CD14-positive monocyte (primary cell): ENCODE measurements at regions of chr2 and their contacts with region 1.

Region 1: GRCh38 chr2:44981136-44982108 is 27.8 kb downstream of the SIX2 start:
- DNase-seq: peak; percentile 42 to 62 (median 49)
- H3K4me3 ChIP-seq: no peak overlapping the region
- H3K4me3 Mint-ChIP-seq: no peak overlapping the region
- H3K27ac ChIP-seq: no peak overlapping the region
- H3K27ac Mint-ChIP-seq: no peak overlapping the region
- H3K4me1 ChIP-seq: no peaks in the 10 kb centered on the region
- H3K4me1 Mint-ChIP-seq: peaks cover 3% of the 10 kb centered on the region
- H3K27me3 ChIP-seq: peaks cover 3 to 10% of the 10 kb centered on the region in 2 donors
- H3K27me3 Mint-ChIP-seq: peaks cover 13 to 23% (median 13%) of the 10 kb centered on the region in 3 donors
- CTCF ChIP-seq: peak; percentile 87

Region 2: GRCh38 chr2:44705356-44705755 is 276.1 kb before region 1 on chr2:
- intact Hi-C with region 1: no loop called
- DNase-seq: no peak
- H3K4me3 ChIP-seq: no peak overlapping the region
- H3K4me3 Mint-ChIP-seq: no peak overlapping the region
- H3K27ac ChIP-seq: no peak overlapping the region
- H3K27ac Mint-ChIP-seq: no peak overlapping the region
- H3K4me1 ChIP-seq: peaks cover 12 to 18% of the 10 kb centered on the region in 2 donors
- H3K4me1 Mint-ChIP-seq: peaks cover 14% of the 10 kb centered on the region
- H3K27me3 ChIP-seq: no peaks in the 10 kb centered on the region
- H3K27me3 Mint-ChIP-seq: peaks cover 0 to 2% (median 0%) of the 10 kb centered on the region in 3 donors
- CTCF ChIP-seq: no peak

Region 3: GRCh38 chr2:45494269-45494977 is 513.0 kb after region 1 on chr2:
- intact Hi-C with region 1: loop called (anchors 2 to 5 kb)
- DNase-seq: peak; percentile 11 to 36 (median 24)
- H3K4me3 ChIP-seq: no peak overlapping the region
- H3K4me3 Mint-ChIP-seq: no peak overlapping the region
- H3K27ac ChIP-seq: no peak overlapping the region
- H3K27ac Mint-ChIP-seq: no peak overlapping the region
- H3K4me1 ChIP-seq: peaks cover 2 to 6% of the 10 kb centered on the region in 2 donors
- H3K4me1 Mint-ChIP-seq: peaks cover 7% of the 10 kb centered on the region
- H3K27me3 ChIP-seq: no peaks in the 10 kb centered on the region
- H3K27me3 Mint-ChIP-seq: no peaks in the 10 kb centered on the region
- CTCF ChIP-seq: peak; percentile 73

Region 4: DNA sequence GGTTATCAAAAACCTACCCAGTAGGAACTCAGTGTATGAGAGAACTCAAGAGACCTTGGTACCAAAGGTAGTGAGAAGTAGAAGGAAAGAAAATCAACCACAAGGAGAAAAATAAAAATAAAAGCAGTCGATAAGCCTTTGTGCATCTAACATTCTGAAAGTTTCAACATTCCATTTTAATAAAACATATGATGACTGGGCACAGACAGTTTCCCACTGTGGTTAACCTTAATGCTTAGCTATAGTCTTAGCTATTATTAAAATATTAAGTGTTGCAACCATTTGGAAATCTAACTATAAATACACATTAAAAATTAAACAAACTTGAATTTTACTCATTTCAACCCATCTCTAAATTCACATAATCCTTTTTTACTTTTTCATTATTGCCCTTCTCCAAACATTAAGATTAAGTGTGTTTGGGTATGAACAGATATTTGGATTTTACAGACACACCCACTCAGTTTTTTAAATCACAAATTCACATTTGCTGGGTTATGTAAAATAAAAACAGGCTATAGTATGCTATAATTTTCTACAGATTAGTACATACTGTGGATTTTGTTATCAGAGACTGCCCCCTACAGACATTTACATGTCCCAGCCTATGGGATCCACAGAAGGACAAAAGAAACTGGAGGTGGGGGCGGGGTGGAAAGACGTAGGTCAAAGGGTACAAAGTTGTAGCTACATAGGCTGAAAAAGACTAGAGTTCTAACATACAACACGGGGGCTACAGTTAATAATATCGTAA is 596.8 kb after region 1 on chr2:
- intact Hi-C with region 1: loop called in 1 of 2 experiments (anchors 5 kb)
- DNase-seq: peak; percentile 38 to 60 (median 54)
- H3K4me3 ChIP-seq: peak overlapping the region in 1 of 3 experiments; percentile 15
- H3K4me3 Mint-ChIP-seq: peak overlapping the region; percentile 60 to 61
- H3K27ac ChIP-seq: no peak overlapping the region
- H3K27ac Mint-ChIP-seq: peak overlapping the region in 5 of 7 donors; percentile 59 to 83 (median 73)
- H3K4me1 ChIP-seq: peaks cover 10 to 32% of the 10 kb centered on the region in 2 donors
- H3K4me1 Mint-ChIP-seq: peaks cover 27% of the 10 kb centered on the region
- H3K27me3 ChIP-seq: no peaks in the 10 kb centered on the region
- H3K27me3 Mint-ChIP-seq: no peaks in the 10 kb centered on the region
- CTCF ChIP-seq: peak; percentile 70